Endothelial cell of umbilical vein (primary cell): ENCODE measurements at regions of chr3 and their contacts with region 1.

Region 1: DNA sequence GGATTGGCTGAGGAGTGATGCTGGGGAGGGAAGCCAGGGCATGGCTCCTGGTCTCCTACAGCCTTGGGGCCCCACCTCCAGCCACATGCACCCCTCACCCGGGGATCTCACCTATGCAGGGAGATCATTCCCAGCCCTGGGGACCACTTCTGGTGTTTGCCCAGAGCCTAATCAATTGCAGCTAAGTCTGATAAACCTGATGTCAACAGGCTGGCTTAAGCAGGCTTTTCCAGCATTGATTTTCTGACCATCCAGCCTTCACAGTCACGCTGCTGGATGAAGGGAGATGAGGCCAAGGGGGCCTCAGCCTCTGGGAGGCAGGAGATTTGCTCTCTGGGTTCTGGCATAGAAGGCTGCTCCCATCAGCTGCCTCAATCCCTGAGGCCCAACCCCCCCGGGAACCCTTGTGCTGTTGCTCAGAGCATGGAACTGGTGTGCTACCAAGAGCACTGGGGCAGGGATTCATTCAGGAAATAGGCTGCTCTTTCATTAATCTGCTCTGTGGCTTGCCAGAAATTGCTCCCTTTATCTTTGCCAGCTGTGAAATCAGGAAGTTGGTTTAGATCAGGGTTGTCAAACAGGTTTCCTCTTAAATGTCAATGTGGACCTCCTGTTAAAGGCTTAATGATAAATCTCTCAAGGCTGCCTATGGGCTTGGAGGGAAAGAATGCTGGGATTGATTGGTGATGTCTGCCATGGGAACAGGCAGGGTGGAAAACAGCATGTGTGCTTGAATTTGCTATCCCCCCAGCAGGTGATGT is 19.0 kb downstream of the FAM3D start:
- DNase-seq: peak; percentile 95
- H3K4me3 ChIP-seq: no peak overlapping the region
- H3K27ac ChIP-seq: peak overlapping the region; percentile 15
- H3K4me1 ChIP-seq: peaks cover 25% of the 10 kb centered on the region
- H3K27me3 ChIP-seq: no peaks in the 10 kb centered on the region
- CTCF ChIP-seq: no peak
- POLR2A ChIP-seq: peak; percentile 67

Region 2: GRCh38 chr3:57998366-57999283 is 648.9 kb before region 1 on chr3:
- CTCF ChIA-PET with region 1: no interaction called
- POLR2A ChIA-PET with region 1: no interaction called
- dilution Hi-C with region 1: no loop called
- intact Hi-C with region 1: no loop called
- DNase-seq: peak; percentile 54
- H3K4me3 ChIP-seq: no peak overlapping the region
- H3K27ac ChIP-seq: no peak overlapping the region
- H3K4me1 ChIP-seq: peaks cover 10% of the 10 kb centered on the region
- H3K27me3 ChIP-seq: no peaks in the 10 kb centered on the region
- CTCF ChIP-seq: no peak
- POLR2A ChIP-seq: no peak

Region 3: DNA sequence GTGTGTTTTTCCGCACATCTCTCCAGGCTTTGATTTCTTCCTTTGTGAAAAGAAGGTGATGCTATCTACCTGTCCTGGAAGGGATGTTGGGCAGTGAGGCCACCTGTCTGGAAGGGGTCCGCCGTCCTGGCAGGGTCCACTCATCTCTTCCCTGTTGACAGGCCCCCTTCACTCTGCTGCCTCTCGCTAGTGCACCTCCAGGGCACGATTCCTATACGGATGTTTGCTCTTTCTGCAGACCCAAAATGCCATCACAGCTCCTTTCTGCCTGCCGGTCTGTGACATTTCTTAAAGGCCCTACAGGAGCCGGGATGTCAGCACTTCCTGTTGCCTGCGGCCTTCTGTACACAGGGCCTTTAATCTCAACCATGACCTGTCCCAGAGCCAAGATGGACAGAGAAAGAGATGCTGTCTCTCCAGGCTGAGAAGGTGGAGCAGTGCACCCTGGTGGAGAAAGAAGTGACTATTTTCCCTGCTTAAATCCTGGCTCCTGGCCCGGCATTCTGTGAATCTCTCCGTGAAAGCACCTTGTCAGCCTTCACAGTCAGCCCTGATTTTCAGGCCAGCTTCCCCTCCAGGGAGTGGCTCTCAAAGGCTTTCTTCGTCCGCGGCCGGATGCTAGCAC is 11.6 kb after region 1 on chr3:
- CTCF ChIA-PET with region 1: interaction called, 118 read pairs
- POLR2A ChIA-PET with region 1: no interaction called
- dilution Hi-C with region 1: no loop called
- intact Hi-C with region 1: loop called (anchors 1 kb)
- DNase-seq: peak; percentile 59
- H3K4me3 ChIP-seq: no peak overlapping the region
- H3K27ac ChIP-seq: no peak overlapping the region
- H3K4me1 ChIP-seq: peaks cover 2% of the 10 kb centered on the region
- H3K27me3 ChIP-seq: peaks cover 0 to 2% of the 10 kb centered on the region in 2 experiments
- CTCF ChIP-seq: peak; percentile 49 to 60
- POLR2A ChIP-seq: no peak

Region 4: DNA sequence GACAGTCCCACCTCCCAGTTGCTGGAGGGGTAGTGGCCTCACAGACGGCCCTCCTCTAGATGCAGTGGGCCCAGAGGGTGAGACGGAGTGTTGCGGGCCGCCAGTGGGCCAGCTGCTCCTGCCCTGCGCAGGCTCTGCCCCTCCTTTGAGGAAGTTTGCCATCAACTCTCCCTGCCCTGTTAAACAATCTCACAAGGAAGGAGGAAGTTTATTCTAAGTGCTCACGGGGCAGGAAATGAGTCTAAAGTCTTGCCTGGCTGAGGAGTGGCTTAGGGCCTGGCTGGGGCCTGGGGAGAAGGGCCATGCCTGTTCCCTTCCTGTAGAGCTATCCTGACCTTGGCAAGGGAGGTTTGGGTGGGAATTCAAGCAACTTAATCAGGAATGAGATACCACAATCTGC is 19.1 kb after region 1 on chr3 and contains the start of gene FAM3D:
- CTCF ChIA-PET with region 1: interaction called, 118 read pairs
- POLR2A ChIA-PET with region 1: no interaction called
- dilution Hi-C with region 1: no loop called
- intact Hi-C with region 1: loop called (anchors 2 kb)
- DNase-seq: peak; percentile 69
- H3K4me3 ChIP-seq: no peak within 1 kb of the TSS
- H3K27ac ChIP-seq: no peak within 1 kb of the TSS
- H3K4me1 ChIP-seq: peaks cover 8% of the 10 kb centered on the region
- H3K27me3 ChIP-seq: peaks cover 0 to 6% of the 10 kb centered on the region in 2 experiments
- CTCF ChIP-seq: no peak
- POLR2A ChIP-seq: no peak
- total RNA-seq, gene FAM3D: not detected in 2 replicates